Caco-2 (cell line): ENCODE measurements at regions of chr14 and their contacts with region 1.

Region 1: GRCh38 chr14:60091550-60092530 is at the start of gene PCNX4:
- DNase-seq: peak; percentile 96 to 97
- H3K4me3 ChIP-seq: peak within 1 kb of the TSS; percentile 79
- H3K4me3 Mint-ChIP-seq: peak within 1 kb of the TSS; percentile 94
- H3K27ac Mint-ChIP-seq: peak within 1 kb of the TSS; percentile 80
- H3K4me1 ChIP-seq: peaks cover 22% of the 10 kb centered on the region
- H3K4me1 Mint-ChIP-seq: peaks cover 20% of the 10 kb centered on the region
- H3K27me3 ChIP-seq: no peaks in the 10 kb centered on the region
- H3K27me3 Mint-ChIP-seq: no peaks in the 10 kb centered on the region
- CTCF ChIP-seq: peak in 1 of 2 experiments; percentile 0
- total RNA-seq, gene PCNX4: 69.4 and 72.7 TPM in 2 replicates

Region 2: DNA sequence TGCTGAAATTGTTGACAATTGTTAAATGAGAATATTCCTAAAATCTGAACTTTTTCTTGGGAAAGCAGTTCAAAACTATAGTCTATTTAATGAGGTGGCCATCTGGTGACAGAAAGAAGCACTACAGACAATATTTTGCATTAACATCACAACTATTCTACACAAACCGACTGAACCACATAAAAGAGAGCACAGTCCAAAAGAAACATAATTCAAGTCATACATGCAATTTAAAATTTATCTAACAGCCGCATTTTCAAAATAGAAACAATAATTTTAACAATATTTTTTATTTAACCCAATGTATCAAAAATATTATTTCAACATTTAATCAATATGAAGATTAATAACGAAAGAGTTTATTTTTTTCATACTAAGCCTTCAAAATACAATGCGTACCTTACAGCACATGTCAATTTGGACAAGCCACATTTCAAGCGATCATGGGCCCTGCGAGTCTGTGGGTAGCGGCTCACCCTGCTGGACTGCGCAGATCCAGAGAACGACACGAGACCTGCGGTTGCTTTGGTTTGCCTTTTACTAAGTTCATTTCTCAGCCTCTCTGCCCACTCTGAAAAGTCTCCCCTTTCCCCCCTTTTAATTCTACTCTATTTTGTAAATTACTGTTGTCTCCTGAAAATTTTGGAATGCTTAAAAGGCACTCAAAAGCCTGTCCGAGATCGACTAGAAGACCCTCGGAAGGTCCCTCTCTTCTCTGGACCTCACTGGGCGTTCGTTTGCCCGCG is 172.8 kb before region 1 on chr14:
- CTCF ChIA-PET with region 1: no interaction called
- POLR2A ChIA-PET with region 1: no interaction called
- intact Hi-C with region 1: no loop called
- DNase-seq: peak; percentile 23 to 38
- H3K4me3 ChIP-seq: peak overlapping the region; percentile 45
- H3K4me3 Mint-ChIP-seq: peak overlapping the region; percentile 85
- H3K27ac Mint-ChIP-seq: peak overlapping the region; percentile 98
- H3K4me1 ChIP-seq: peaks cover 10% of the 10 kb centered on the region
- H3K4me1 Mint-ChIP-seq: peaks cover 5% of the 10 kb centered on the region
- H3K27me3 ChIP-seq: no peaks in the 10 kb centered on the region
- H3K27me3 Mint-ChIP-seq: no peaks in the 10 kb centered on the region
- CTCF ChIP-seq: peak; percentile 34 to 50

Region 3: DNA sequence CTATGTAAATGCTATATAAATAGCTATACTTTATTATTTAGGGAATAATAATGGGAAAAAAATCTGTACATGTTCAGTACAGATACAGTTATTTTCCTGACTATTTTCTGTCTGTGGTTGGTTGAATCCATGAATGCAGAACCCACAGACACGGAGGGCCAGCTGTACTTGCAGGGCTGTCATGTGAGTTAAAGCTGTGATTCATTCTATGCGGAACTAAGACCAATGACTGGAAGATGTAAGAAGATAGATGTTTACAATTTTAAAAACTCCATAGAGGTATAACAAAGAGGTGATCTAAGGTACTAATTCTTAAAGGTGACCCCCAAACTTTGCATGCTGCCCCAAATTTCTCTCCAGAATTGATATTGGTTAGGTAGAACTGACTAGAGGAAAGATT is 14.5 kb after region 1 on chr14:
- CTCF ChIA-PET with region 1: no interaction called
- POLR2A ChIA-PET with region 1: no interaction called
- intact Hi-C with region 1: no loop called
- DNase-seq: no peak
- H3K4me3 ChIP-seq: no peak overlapping the region
- H3K4me3 Mint-ChIP-seq: no peak overlapping the region
- H3K27ac Mint-ChIP-seq: no peak overlapping the region
- H3K4me1 ChIP-seq: no peaks in the 10 kb centered on the region; the same call in 1 of the 2 replicates
- H3K4me1 Mint-ChIP-seq: peaks cover 7% of the 10 kb centered on the region
- H3K27me3 ChIP-seq: no peaks in the 10 kb centered on the region
- H3K27me3 Mint-ChIP-seq: no peaks in the 10 kb centered on the region
- CTCF ChIP-seq: no peak

Region 4: DNA sequence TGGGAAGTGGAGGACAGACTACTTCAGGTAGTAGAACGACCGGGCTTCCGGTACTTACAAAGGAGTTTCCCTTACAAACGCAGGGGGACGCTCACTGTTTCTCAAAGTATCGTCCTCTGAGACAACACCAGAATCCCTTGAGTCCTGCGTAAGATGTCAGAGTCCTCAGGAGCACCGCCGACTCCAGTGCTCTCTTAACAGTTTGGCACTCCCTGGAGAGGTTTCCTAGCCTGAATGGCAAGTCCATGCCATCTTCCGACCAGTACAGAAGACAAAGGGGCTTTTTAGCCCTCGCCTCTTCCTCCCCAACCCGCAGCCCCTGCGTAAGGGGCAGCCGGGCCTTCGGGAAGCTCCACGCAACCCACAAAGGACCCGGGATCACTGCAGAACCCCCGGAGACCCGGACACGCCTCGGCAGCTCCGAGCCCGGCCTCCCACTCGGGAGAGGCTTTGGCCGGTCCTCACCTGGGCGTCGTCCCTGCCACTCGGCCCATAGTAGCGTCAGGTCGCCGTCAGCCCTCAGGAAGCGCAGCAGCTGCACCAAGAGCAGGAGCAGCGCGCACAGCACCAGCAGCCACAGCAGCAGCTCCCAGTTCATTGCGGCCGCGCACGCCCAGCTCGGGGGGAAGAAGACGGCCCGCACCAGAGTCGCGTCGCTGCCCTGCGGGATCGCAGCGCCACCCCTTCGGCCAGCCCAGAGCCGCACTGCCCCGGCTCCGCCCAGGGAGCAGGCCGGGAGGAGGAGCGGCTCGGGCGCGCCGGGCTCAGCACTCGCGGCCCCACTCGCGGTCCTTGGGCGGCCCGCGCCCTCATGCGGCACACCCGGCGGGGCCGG is 73.1 kb after region 1 on chr14 and contains the start of gene DHRS7:
- CTCF ChIA-PET with region 1: interaction called, 4 read pairs
- POLR2A ChIA-PET with region 1: no interaction called
- intact Hi-C with region 1: loop called (anchors 1 kb)
- DNase-seq: peak; percentile 83 to 89
- H3K4me3 ChIP-seq: peak within 1 kb of the TSS; percentile 78
- H3K4me3 Mint-ChIP-seq: peak within 1 kb of the TSS; percentile 94
- H3K27ac Mint-ChIP-seq: peak within 1 kb of the TSS; percentile 84
- H3K4me1 ChIP-seq: no peaks in the 10 kb centered on the region
- H3K4me1 Mint-ChIP-seq: no peaks in the 10 kb centered on the region
- H3K27me3 ChIP-seq: no peaks in the 10 kb centered on the region
- H3K27me3 Mint-ChIP-seq: no peaks in the 10 kb centered on the region
- CTCF ChIP-seq: peak; percentile 15 to 26
- total RNA-seq, gene DHRS7: 61.6 and 65.6 TPM in 2 replicates

Region 5: DNA sequence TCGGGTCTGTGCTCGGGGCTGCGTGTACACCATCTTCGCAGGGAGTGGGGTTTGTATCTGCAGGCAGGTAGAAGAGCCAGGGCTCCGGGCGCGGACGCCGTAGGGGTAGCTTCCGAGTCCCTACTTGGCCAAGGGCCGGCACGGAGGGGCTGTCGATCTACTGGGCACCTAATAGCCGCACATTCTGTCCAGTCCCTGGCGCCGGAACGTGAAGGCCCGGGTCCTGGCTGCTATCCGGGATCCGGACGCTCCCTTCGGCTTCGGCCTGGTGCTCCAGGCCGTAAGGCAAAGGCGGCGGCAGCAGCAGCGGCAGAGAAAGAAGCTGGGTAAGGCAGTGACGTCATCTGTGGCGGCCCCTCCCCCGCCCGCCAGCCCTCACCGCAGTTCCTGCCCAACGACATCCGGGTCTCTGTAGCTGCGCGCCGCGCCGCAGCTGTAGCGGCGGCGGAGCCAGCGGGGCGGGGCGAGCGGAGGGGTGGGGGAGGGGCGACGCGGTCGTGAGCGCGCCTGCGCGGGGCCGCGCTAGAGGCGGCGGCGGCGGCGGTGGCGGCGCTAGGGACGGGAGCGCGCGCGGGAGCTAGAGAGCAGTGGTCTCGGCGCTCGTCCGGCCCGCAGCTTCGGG is 157.0 kb after region 1 on chr14 and contains the start of gene PPM1A:
- CTCF ChIA-PET with region 1: no interaction called
- POLR2A ChIA-PET with region 1: interaction called, 21 read pairs
- intact Hi-C with region 1: loop called (anchors 1 kb)
- DNase-seq: peak; percentile 94 to 95
- H3K4me3 ChIP-seq: peak within 1 kb of the TSS; percentile 97
- H3K4me3 Mint-ChIP-seq: peak within 1 kb of the TSS; percentile 96
- H3K27ac Mint-ChIP-seq: peak within 1 kb of the TSS; percentile 99
- H3K4me1 ChIP-seq: peaks cover 30% of the 10 kb centered on the region
- H3K4me1 Mint-ChIP-seq: peaks cover 30% of the 10 kb centered on the region
- H3K27me3 ChIP-seq: no peaks in the 10 kb centered on the region
- H3K27me3 Mint-ChIP-seq: no peaks in the 10 kb centered on the region
- CTCF ChIP-seq: no peak
- total RNA-seq, gene PPM1A: 34.9 and 35.6 TPM in 2 replicates

Region 6: DNA sequence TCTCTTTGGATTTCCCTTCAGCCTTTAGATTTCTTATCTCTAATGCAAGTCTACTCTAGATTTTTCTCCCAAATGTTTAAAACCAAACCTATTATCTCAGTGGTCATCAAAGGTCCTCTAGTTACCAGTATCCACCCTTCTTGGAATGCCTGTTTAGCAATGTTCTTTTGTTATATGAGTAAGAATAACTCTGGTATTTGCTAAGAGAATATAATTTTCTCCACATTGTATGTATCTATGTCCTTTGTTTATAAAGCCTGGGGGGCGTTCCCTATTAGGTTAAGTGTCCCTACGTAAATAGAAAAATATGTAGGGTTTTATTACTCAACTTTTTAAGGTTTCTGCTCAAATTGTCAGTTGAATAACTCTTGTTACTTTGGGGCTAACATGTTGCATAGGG is 184.5 kb after region 1 on chr14:
- CTCF ChIA-PET with region 1: no interaction called
- POLR2A ChIA-PET with region 1: no interaction called
- intact Hi-C with region 1: loop called (anchors 10 kb)
- DNase-seq: peak in 1 of 2 experiments; percentile 14
- H3K4me3 ChIP-seq: no peak overlapping the region
- H3K4me3 Mint-ChIP-seq: peak overlapping the region; percentile 30
- H3K27ac Mint-ChIP-seq: no peak overlapping the region
- H3K4me1 ChIP-seq: peaks cover 45% of the 10 kb centered on the region
- H3K4me1 Mint-ChIP-seq: peaks cover 40% of the 10 kb centered on the region
- H3K27me3 ChIP-seq: no peaks in the 10 kb centered on the region
- H3K27me3 Mint-ChIP-seq: no peaks in the 10 kb centered on the region
- CTCF ChIP-seq: no peak

Region 7: GRCh38 chr14:60482743-60483142 is 390.9 kb after region 1 on chr14:
- CTCF ChIA-PET with region 1: no interaction called
- POLR2A ChIA-PET with region 1: no interaction called
- intact Hi-C with region 1: no loop called
- DNase-seq: no peak
- H3K4me3 ChIP-seq: no peak overlapping the region
- H3K4me3 Mint-ChIP-seq: no peak overlapping the region
- H3K27ac Mint-ChIP-seq: no peak overlapping the region
- H3K4me1 ChIP-seq: no peaks in the 10 kb centered on the region
- H3K4me1 Mint-ChIP-seq: no peaks in the 10 kb centered on the region
- H3K27me3 ChIP-seq: no peaks in the 10 kb centered on the region
- H3K27me3 Mint-ChIP-seq: peaks cover 3% of the 10 kb centered on the region
- CTCF ChIP-seq: no peak